Esophagus squamous epithelium (tissue), 5 donors: ENCODE measurements at regions of chr9 and their contacts with region 1.

Region 1: DNA sequence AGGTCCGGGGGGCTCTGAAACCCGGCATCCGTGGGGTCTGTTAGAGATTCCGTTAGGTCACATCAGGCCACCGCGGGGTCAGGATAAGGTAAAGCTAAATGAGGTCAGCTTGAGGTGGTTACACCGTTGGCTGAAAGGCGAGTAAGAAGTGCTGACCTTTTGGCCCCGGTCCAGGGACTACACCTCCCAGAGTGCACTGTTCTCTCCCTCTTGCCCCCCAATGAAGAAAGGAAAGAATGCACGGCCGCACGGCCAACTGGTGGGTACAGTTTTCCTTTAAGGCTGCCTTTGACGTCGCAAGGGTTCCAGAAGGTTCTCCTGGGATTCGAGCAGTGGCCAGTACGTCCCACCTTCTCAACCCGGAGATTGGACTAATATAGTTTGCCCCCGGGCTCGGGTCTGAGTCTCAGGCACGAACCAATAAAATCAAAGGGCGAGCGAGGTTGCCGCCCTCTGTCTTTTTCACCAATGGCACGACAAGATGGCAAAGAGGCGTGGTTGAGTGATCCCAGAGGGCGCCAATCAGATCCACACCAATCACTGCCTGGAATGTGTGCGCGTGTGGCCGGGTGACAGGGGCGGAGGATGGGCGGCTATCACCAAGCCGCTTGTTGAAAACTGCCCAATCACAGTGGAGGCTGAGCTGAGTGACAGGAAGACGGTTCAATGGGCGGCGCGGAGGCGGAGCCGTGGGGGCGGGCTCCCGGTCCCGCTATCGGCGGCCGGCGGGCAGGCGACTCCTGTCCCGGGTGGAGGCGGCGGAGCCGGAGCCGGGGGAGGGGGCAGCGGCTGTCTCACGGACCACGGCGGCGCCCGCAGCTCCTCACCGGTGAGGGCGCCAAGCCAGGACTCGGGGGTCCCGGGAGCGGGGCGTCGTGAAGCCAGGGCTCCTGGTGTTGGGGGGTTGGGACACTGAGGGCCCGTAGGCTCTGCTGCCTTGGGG is at the start of gene DNAJB5:
- DNase-seq: peak; percentile 95
- H3K4me3 ChIP-seq: peak within 1 kb of the TSS; percentile 66 to 94 (median 82)
- H3K27ac ChIP-seq: peak within 1 kb of the TSS; percentile 89 to 97 (median 96)
- H3K4me1 ChIP-seq: peaks cover 28 to 71% (median 50%) of the 10 kb centered on the region in 3 donors
- H3K27me3 ChIP-seq: no peaks in the 10 kb centered on the region
- CTCF ChIP-seq: peak in 3 of 6 experiments; percentile 3 to 13 (median 5)
- POLR2A ChIP-seq: peak in 3 of 4 donors; percentile 78 to 92 (median 87)
- total RNA-seq, gene DNAJB5: 3.5 to 16.6 (median 6.5) TPM

Region 2: GRCh38 chr9:34591248-34591916 is 397.9 kb before region 1 on chr9:
- intact Hi-C with region 1: no loop called
- DNase-seq: no peak
- H3K4me3 ChIP-seq: peak overlapping the region; percentile 28 to 73 (median 56)
- H3K27ac ChIP-seq: peak overlapping the region in 3 of 4 donors; percentile 15 to 62 (median 55)
- H3K4me1 ChIP-seq: peaks cover 29 to 64% (median 31%) of the 10 kb centered on the region in 3 donors
- H3K27me3 ChIP-seq: peaks cover 0 to 82% (median 2%) of the 10 kb centered on the region in 4 donors
- CTCF ChIP-seq: peak; percentile 81 to 91 (median 86)
- POLR2A ChIP-seq: no peak

Region 3: DNA sequence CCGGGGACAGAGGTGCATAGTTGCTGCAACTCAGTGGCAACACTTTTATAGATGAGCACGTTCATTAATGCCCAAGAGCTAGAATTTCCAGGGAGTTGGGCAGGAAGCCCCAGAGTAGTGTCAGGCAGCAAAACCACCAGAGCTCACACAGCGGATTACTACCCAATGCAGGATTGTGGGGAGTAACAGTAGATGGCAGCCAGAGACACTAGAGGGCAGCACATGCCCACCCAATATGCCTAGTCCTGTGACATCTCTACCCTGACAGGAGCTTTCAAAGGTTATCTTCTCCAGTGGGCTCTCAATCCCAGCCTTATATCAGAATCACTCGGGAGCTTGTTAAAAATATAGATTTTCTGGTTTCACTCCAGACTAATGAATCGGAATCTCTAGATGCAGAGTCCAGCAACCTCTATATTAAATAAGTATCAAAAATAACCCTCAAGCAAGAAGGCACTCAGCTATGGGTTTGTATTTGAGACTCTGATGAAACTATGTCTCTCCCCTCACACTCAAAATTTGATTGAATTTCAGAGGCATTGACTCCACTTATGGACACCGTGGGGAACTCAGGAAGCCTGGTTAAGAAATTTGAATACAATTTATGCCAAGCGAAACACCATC is 89.6 kb before region 1 on chr9:
- intact Hi-C with region 1: loop called (anchors 5 kb)
- DNase-seq: no peak
- H3K4me3 ChIP-seq: no peak overlapping the region
- H3K27ac ChIP-seq: no peak overlapping the region
- H3K4me1 ChIP-seq: no peaks in the 10 kb centered on the region
- H3K27me3 ChIP-seq: peaks cover 0 to 44% (median 0%) of the 10 kb centered on the region in 4 donors
- CTCF ChIP-seq: peak; percentile 75 to 89 (median 80)
- POLR2A ChIP-seq: no peak

Region 4: GRCh38 chr9:35071814-35072460 is 82.7 kb after region 1 on chr9:
- intact Hi-C with region 1: loop called (anchors 10 kb)
- DNase-seq: peak; percentile 48
- H3K4me3 ChIP-seq: peak overlapping the region; percentile 83 to 98 (median 94)
- H3K27ac ChIP-seq: peak overlapping the region; percentile 99 to 100 (median 100)
- H3K4me1 ChIP-seq: peaks cover 15 to 51% (median 36%) of the 10 kb centered on the region in 3 donors
- H3K27me3 ChIP-seq: no peaks in the 10 kb centered on the region
- CTCF ChIP-seq: peak in 3 of 6 experiments; percentile 10 to 40 (median 24)
- POLR2A ChIP-seq: peak in 2 of 4 donors; percentile 7 to 40

Region 5: DNA sequence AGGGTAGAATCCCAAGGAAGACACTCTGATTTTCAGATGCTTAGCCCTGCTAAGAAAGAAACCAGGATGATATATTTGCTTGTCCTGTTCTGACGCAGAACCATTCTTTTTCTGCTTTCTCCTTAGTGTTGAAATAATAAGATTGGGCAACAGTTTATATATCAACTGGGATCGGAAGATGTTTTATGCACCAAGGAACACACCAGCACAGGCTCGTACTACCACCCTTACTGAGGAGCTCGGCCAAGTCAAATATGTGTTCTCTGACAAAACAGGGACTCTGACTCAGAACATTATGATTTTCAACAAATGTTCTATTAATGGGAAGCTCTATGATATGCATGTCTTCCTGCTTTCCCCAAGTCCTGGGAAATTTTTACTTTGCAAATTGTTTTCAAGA is 481.6 kb after region 1 on chr9:
- intact Hi-C with region 1: loop called (anchors 10 kb)
- DNase-seq: no peak
- H3K4me3 ChIP-seq: no peak overlapping the region
- H3K27ac ChIP-seq: peak overlapping the region in 2 of 4 donors; percentile 47 to 70
- H3K4me1 ChIP-seq: peaks cover 0 to 11% (median 6%) of the 10 kb centered on the region in 3 donors
- H3K27me3 ChIP-seq: peaks cover 0 to 6% (median 0%) of the 10 kb centered on the region in 4 donors
- CTCF ChIP-seq: no peak
- POLR2A ChIP-seq: no peak